ENCODE measurements at regions of chr19 and their contacts with region 1.

Region 1: DNA sequence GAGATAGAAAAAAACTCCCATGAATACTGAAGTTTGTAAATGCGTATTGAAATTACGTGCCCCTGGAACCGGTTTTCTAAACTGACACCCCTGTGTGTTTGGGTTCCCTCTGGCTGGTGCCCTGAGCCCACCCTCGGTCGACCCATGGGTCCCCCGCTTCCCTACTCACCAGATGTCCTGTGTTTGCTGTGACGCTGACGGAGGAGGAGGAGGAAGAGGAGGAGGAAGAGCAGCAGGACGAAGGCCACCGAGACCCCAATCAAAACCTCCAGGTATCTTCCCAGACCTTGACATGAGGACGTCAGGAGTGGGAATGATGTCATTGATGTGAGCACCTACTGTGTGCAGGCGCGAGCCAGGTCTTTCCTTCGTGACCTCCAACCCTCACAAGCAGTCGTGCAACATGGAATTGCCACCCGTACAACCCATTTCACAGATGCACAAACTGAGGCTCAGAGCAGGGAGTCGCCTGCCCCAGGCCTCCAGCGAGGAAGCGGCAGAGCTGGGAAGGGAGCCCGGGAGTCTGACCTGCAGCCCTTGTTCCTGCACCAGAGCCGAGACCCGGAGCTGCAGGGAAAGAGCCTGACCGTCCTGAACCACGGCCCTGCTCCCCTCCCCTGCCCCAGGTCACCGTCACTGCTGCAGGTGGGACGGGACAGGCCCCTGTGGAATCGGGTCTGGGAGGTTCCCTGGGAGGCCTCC is 3.7 kb downstream of the LILRB3 start:
- DNase-seq: peak in 2 of 7 donors; percentile 0 to 44
- H3K4me3 ChIP-seq: no peak overlapping the region
- H3K27ac ChIP-seq: no peak overlapping the region
- H3K4me1 ChIP-seq: no peaks in the 10 kb centered on the region
- H3K27me3 ChIP-seq: no peaks in the 10 kb centered on the region
- CTCF ChIP-seq: no peak
- POLR2A ChIP-seq: no peak

Region 2: GRCh38 chr19:54035215-54036178 is 183.6 kb before region 1 on chr19:
- intact Hi-C with region 1: no loop called
- DNase-seq: no peak
- H3K4me3 ChIP-seq: no peak overlapping the region
- H3K27ac ChIP-seq: no peak overlapping the region
- H3K4me1 ChIP-seq: no peaks in the 10 kb centered on the region
- H3K27me3 ChIP-seq: no peaks in the 10 kb centered on the region
- CTCF ChIP-seq: no peak
- POLR2A ChIP-seq: no peak

Region 3: GRCh38 chr19:54159352-54160181 is 59.5 kb before region 1 on chr19 and contains the start of gene LENG1:
- intact Hi-C with region 1: no loop called
- DNase-seq: peak; percentile 100
- H3K4me3 ChIP-seq: peak within 1 kb of the TSS; percentile 10 to 89 (median 56)
- H3K27ac ChIP-seq: peak within 1 kb of the TSS; percentile 82 to 100 (median 95)
- H3K4me1 ChIP-seq: peaks cover 22 to 46% of the 10 kb centered on the region in 2 donors
- H3K27me3 ChIP-seq: no peaks in the 10 kb centered on the region
- CTCF ChIP-seq: peak in 3 of 6 experiments; percentile 12 to 30 (median 19)
- POLR2A ChIP-seq: peak; percentile 29 to 82
- total RNA-seq, gene LENG1: 5.0 to 21.7 (median 9.5) TPM

Region 4: GRCh38 chr19:54245936-54246335 is 26.8 kb after region 1 on chr19:
- intact Hi-C with region 1: loop called in 1 of 2 experiments (anchors 2 kb)
- DNase-seq: peak in 1 of 7 donors; percentile 15
- H3K4me3 ChIP-seq: no peak overlapping the region
- H3K27ac ChIP-seq: no peak overlapping the region
- H3K4me1 ChIP-seq: no peaks in the 10 kb centered on the region
- H3K27me3 ChIP-seq: no peaks in the 10 kb centered on the region
- CTCF ChIP-seq: no peak
- POLR2A ChIP-seq: no peak

Region 5: GRCh38 chr19:54256250-54257115 is 37.4 kb after region 1 on chr19:
- intact Hi-C with region 1: no loop called
- DNase-seq: peak in 1 of 7 donors; percentile 47
- H3K4me3 ChIP-seq: peak overlapping the region in 2 of 4 donors; percentile 6 to 30
- H3K27ac ChIP-seq: peak overlapping the region in 2 of 5 donors; percentile 21 to 65
- H3K4me1 ChIP-seq: peaks cover 7% of the 10 kb centered on the region in 2 donors
- H3K27me3 ChIP-seq: no peaks in the 10 kb centered on the region
- CTCF ChIP-seq: no peak
- POLR2A ChIP-seq: no peak

Region 6: GRCh38 chr19:54297760-54298305 is 78.7 kb after region 1 on chr19:
- intact Hi-C with region 1: no loop called
- DNase-seq: no peak
- H3K4me3 ChIP-seq: no peak overlapping the region
- H3K27ac ChIP-seq: no peak overlapping the region
- H3K4me1 ChIP-seq: no peaks in the 10 kb centered on the region
- H3K27me3 ChIP-seq: no peaks in the 10 kb centered on the region
- CTCF ChIP-seq: no peak
- POLR2A ChIP-seq: no peak